ENCODE measurements at regions of chrX and their contacts with region 1.

Region 1: GRCh38 chrX:80876877-80877276 is 67.2 kb upstream of the BRWD3 start:
- DNase-seq: peak; percentile 11
- H3K4me3 ChIP-seq: no peak overlapping the region
- H3K27ac ChIP-seq: no peak overlapping the region
- H3K4me1 ChIP-seq: no peaks in the 10 kb centered on the region
- H3K27me3 ChIP-seq: no peaks in the 10 kb centered on the region
- CTCF ChIP-seq: peak; percentile 47 to 49

Region 2: DNA sequence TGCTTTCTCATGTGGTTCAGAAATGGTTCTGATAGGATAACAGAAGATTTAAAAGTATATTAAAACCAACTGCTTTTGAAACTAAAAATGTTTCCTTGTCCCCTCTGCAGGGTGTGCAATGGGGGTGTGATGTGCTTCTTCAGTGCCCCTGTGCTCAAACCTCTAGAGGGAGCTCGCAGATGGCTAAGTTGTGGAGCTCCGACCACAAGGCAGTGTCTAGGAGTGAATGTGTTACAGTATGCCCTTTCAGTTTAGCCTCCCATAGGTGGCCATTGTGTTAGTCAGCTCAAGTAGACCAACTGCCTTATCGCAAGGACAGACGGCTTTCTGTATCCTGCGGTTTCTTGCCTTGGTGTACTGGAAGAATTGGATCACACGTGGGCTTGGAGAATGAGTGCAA is 326.2 kb before region 1 on chrX:
- CTCF ChIA-PET with region 1: no interaction called
- dilution Hi-C with region 1: no loop called
- in situ Hi-C with region 1: no loop called
- intact Hi-C with region 1: no loop called
- DNase-seq: no peak
- H3K4me3 ChIP-seq: no peak overlapping the region
- H3K27ac ChIP-seq: no peak overlapping the region
- H3K4me1 ChIP-seq: no peaks in the 10 kb centered on the region
- H3K27me3 ChIP-seq: no peaks in the 10 kb centered on the region
- CTCF ChIP-seq: no peak

Region 3: DNA sequence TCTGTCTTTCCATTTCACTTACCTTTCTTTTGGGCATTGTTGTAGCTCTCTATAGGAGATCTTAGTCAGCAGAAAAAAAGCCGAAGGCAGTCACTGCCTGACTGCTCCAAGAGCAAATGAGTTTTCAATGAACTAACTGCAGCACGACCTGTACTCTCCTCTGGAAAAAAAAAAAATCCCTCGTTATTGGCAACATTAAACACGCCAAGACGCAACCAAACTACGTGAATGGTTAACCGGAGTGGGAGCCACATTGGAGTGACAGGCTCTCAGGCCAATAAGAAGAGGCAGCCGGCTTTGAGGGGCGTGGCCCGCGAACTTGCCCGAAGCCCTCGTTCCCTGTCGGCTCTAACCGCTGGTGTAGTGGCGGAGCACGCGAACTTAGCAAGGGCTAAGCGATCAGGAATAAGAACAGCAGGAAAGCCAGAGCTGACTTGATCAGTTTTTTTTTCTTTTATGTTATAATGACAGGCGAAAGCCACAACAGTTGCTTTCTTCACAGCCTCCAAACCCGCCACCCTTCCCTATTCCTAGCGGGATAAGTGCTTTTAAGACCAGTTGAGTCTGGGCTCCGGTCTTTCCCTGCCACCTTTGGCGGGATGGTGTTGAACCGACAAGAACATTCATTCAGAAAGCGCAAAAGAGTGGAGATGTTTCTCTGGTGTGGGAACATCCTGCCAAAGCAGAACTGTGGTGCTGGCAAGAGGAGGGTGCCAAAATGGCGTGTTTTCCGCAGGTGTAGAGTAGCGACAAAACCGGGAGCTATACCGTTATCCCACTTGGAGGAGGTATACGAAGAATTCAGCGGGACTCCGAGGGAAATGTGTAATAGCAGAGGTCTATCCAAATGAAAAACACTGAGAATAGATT is 244.9 kb after region 1 on chrX:
- CTCF ChIA-PET with region 1: interaction called, 5 read pairs
- dilution Hi-C with region 1: no loop called
- in situ Hi-C with region 1: loop called in 1 of 2 experiments (anchors 25 kb)
- intact Hi-C with region 1: loop called (anchors 5 kb)
- DNase-seq: peak; percentile 89
- H3K4me3 ChIP-seq: peak overlapping the region; percentile 61 to 87 (median 66)
- H3K27ac ChIP-seq: no peak overlapping the region
- H3K4me1 ChIP-seq: no peaks in the 10 kb centered on the region
- H3K27me3 ChIP-seq: no peaks in the 10 kb centered on the region
- CTCF ChIP-seq: no peak